ENCODE measurements at regions of chr7 and their contacts with region 1.

Region 1: GRCh38 chr7:155763691-155764437 is 48.4 kb downstream of the SHH start:
- DNase-seq: peak; percentile 80
- ATAC-seq: peak; percentile 77
- H3K4me3 Mint-ChIP-seq: peak overlapping the region; percentile 69
- H3K27ac Mint-ChIP-seq: peak overlapping the region; percentile 95
- H3K4me1 Mint-ChIP-seq: peaks cover 62% of the 10 kb centered on the region
- H3K27me3 Mint-ChIP-seq: no peaks in the 10 kb centered on the region
- CTCF ChIP-seq: no peak

Region 2: DNA sequence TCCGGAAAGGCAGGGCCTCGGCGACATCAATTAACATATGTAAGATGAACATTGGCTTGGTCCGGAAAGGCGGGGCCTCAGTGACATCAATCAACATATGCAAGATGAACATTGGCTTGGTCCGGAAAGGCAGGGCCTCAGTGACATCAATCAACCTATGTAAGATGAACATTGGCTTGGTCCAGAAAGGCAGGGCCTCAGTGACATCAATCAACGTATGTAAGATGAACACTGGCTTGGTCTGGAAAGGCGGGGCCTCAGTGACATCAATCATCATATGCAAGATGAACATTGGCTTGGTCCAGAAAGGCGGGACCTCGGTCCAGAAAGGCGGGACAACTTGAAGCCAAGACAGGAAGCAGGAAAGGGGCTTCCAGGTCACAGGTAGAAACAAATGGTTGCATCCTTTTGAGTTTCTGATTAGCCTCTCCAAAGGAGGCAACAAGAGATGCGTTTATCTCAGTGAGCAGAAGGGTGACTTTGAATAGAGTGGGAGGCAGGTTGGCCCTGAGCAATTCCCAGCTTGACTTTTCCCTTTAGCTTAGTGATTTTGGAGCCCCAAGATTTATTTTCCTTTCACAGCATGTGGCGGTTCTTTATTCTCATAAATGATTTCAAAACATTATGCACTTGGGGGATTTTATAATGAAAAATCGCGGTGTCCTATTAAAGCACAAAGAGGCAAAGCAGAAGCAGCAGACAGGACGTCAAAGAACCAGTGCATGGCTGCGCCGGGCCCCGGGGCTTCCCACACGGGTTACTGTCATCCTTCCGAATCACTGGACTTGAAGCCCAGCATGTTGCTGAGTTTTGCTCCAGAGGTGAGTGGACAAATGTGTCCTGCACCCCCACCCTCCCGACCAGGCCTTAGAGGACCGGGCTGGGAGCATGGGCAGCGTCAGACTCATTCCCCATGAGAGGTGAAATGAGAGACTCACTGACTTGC is 349.0 kb before region 1 on chr7:
- CTCF ChIA-PET with region 1: no interaction called
- POLR2A ChIA-PET with region 1: no interaction called
- intact Hi-C with region 1: no loop called
- DNase-seq: no peak
- ATAC-seq: no peak
- H3K4me3 Mint-ChIP-seq: no peak overlapping the region
- H3K27ac Mint-ChIP-seq: no peak overlapping the region
- H3K4me1 Mint-ChIP-seq: no peaks in the 10 kb centered on the region
- H3K27me3 Mint-ChIP-seq: peaks cover 16% of the 10 kb centered on the region
- CTCF ChIP-seq: no peak

Region 3: GRCh38 chr7:155644178-155644970 is 119.5 kb before region 1 on chr7 and contains the start of gene RBM33:
- CTCF ChIA-PET with region 1: interaction called, 4 read pairs
- POLR2A ChIA-PET with region 1: interaction called, 5 read pairs
- intact Hi-C with region 1: loop called (anchors 10 kb)
- DNase-seq: peak; percentile 85
- ATAC-seq: peak; percentile 82
- H3K4me3 Mint-ChIP-seq: peak within 1 kb of the TSS; percentile 89
- H3K27ac Mint-ChIP-seq: peak within 1 kb of the TSS; percentile 98
- H3K4me1 Mint-ChIP-seq: peaks cover 39% of the 10 kb centered on the region
- H3K27me3 Mint-ChIP-seq: no peaks in the 10 kb centered on the region
- CTCF ChIP-seq: no peak
- total RNA-seq, gene RBM33: 73.7 to 84.8 TPM

Region 4: DNA sequence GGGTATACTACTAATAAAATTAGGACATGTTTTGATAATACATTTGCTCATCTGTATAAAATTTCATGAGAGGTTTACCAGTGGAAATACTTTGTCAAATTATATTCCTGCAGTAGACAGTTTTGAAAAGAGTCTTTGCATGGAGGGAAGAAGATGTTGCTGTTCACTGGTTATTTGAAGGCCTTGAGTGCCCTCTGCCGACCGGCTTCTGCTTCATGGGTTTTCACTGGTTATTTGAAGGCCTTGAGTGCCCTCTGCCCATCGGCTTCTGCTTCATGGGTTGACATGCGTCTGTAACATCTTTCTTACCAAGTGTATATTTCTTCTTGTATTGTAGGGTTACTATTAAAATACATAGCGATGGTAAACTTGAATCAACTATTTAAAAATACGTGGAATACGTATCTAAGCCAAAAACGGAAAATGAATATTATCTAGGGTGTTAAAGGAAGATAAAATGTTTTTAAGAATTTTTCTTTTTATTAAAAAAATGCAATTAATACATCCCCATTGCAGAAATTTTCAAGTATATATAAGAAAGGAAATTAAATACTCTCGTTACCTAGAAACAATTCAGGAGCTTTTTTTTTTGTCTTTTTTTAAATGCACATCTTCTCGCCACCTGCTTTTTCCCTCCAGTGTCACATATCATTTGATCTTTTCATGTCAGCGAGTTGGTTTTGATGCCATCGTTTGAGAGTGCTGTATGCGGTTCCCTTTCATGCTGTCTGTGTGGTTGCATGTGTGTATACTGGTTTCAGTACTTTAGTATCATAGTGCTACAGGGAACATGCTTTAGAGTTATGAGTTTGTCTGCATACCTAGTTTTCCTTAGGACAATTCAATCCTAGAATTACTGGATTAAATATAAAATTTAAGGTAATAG is 25.0 kb before region 1 on chr7:
- CTCF ChIA-PET with region 1: interaction called, 34 read pairs
- POLR2A ChIA-PET with region 1: interaction called, 6 read pairs
- intact Hi-C with region 1: loop called (anchors 2 kb)
- DNase-seq: peak; percentile 89
- ATAC-seq: peak; percentile 66
- H3K4me3 Mint-ChIP-seq: peak overlapping the region; percentile 59
- H3K27ac Mint-ChIP-seq: peak overlapping the region; percentile 82
- H3K4me1 Mint-ChIP-seq: peaks cover 68% of the 10 kb centered on the region
- H3K27me3 Mint-ChIP-seq: no peaks in the 10 kb centered on the region
- CTCF ChIP-seq: peak; percentile 73

Region 5: GRCh38 chr7:155752756-155753445 is 11.0 kb before region 1 on chr7:
- CTCF ChIA-PET with region 1: interaction called, 19 read pairs
- POLR2A ChIA-PET with region 1: interaction called, 17 read pairs
- intact Hi-C with region 1: no loop called
- DNase-seq: no peak
- ATAC-seq: peak; percentile 15
- H3K4me3 Mint-ChIP-seq: no peak overlapping the region
- H3K27ac Mint-ChIP-seq: peak overlapping the region; percentile 74
- H3K4me1 Mint-ChIP-seq: peaks cover 82% of the 10 kb centered on the region
- H3K27me3 Mint-ChIP-seq: no peaks in the 10 kb centered on the region
- CTCF ChIP-seq: no peak